Panc1 (cell line): ENCODE measurements at regions of chr22 and their contacts with region 1.

Region 1: DNA sequence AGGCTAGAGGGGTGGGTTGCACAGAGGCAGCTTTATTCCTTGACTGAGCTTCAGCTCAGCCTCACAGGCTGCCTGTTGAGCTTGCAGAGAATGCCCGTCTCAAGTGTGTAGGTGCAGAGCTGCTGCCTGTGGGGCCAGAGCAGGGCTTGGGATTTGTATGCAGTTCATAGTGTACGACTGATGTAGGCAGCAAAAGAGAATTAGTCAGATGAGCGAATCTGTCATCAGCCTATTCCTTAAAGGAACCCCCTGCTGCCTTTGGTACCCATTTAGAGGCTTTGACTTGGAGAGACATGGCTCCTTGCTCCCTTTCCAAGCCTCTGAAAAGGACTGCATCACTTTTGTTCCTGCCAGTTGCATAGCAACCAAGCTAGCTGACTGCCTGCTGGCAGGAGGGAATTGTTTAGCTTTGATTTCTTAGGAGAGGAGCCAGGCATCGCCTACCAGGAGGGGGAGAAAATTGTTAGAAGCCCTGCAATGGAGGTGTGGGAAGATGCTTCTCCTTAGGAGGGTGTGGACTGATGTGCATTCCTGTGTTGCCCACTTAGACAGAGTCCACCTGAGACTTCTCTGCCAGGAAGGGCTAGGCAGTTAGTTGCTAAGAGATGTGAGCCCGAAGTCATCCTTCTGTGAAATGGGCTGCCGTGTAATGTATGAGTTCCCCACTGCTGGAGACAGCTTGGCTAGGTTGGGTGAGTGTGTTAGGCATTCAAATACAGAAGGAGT is 10.9 kb downstream of the ACO2 start:
- DNase-seq: no peak
- ATAC-seq: no peak; the same call in 1 of the 2 replicates
- H3K4me3 ChIP-seq: no peak overlapping the region
- H3K27ac ChIP-seq: no peak overlapping the region
- H3K4me1 ChIP-seq: peaks cover 37% of the 10 kb centered on the region
- H3K27me3 ChIP-seq: no peaks in the 10 kb centered on the region
- CTCF ChIP-seq: no peak

Region 2: GRCh38 chr22:41417622-41418390 is 62.0 kb before region 1 on chr22:
- CTCF ChIA-PET with region 1: no interaction called
- POLR2A ChIA-PET with region 1: no interaction called
- in situ Hi-C with region 1: no loop called
- intact Hi-C with region 1: no loop called
- DNase-seq: no peak
- ATAC-seq: no peak
- H3K4me3 ChIP-seq: no peak overlapping the region
- H3K27ac ChIP-seq: no peak overlapping the region
- H3K4me1 ChIP-seq: peaks cover 6% of the 10 kb centered on the region
- H3K27me3 ChIP-seq: no peaks in the 10 kb centered on the region
- CTCF ChIP-seq: no peak

Region 3: DNA sequence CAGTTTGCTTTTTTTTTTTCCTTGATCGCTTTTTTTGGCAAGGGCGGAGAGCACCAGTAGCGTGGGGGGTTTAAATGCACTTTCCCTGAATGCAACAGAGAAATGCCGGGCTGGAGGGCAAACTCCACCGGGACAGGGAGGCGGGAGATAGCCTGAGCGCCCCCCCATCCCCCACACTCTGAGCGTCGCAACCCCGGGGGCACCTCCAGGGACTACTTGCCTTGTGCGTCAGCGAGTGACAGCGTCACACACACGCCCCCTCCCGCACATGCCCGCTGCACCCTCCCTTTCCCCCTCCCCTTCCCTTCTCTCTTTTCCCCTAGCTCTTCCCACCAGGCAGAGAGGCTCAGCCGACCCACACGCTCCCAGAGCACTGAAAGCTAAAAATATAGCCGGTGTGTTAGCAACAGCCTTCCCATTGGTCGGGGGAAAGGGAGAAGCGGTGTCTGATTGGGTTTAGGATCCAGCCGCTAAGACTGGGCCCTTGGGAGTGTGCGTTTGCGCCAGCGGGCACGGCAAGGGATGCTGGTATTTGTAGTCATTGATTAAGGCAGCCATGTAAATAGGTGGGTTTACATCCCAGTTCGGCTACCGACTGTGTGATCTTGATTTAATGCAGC is 31.5 kb before region 1 on chr22:
- CTCF ChIA-PET with region 1: no interaction called
- POLR2A ChIA-PET with region 1: interaction called, 14 read pairs
- in situ Hi-C with region 1: no loop called
- intact Hi-C with region 1: no loop called
- DNase-seq: peak; percentile 95
- ATAC-seq: peak; percentile 87
- H3K4me3 ChIP-seq: peak overlapping the region; percentile 81 to 96
- H3K27ac ChIP-seq: peak overlapping the region; percentile 95
- H3K4me1 ChIP-seq: no peaks in the 10 kb centered on the region
- H3K27me3 ChIP-seq: no peaks in the 10 kb centered on the region
- CTCF ChIP-seq: no peak

Region 4: DNA sequence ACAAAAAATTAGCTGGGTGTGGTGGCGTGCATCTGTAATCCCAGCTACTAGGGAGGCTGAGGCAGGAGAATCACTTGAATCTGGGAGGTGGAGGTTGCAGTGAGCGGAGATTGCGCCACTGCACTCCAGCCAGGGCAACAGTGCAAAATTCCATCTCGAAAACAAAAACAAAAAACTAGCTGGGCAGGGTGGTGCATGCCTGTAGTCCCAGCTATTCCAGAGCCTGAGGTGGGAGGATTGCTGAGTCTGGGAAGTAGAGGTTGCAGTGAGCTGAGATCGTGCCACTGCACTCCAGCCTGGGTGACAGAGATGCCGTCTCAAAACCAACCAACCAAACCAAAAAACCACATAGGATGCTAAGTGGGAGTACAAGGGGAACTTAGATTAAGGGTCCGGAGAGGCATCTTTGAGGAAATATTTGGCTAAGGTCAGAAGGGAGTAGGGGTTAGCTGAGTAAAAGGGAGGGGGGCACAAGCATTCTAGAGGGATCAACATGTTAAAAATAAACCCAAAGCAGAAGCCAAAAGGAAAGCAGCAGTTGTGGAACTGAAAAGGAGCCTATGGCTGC is 21.6 kb before region 1 on chr22:
- CTCF ChIA-PET with region 1: no interaction called
- POLR2A ChIA-PET with region 1: interaction called, 10 read pairs
- in situ Hi-C with region 1: no loop called
- intact Hi-C with region 1: no loop called
- DNase-seq: no peak
- ATAC-seq: no peak
- H3K4me3 ChIP-seq: no peak overlapping the region
- H3K27ac ChIP-seq: no peak overlapping the region
- H3K4me1 ChIP-seq: no peaks in the 10 kb centered on the region
- H3K27me3 ChIP-seq: no peaks in the 10 kb centered on the region
- CTCF ChIP-seq: no peak

Region 5: DNA sequence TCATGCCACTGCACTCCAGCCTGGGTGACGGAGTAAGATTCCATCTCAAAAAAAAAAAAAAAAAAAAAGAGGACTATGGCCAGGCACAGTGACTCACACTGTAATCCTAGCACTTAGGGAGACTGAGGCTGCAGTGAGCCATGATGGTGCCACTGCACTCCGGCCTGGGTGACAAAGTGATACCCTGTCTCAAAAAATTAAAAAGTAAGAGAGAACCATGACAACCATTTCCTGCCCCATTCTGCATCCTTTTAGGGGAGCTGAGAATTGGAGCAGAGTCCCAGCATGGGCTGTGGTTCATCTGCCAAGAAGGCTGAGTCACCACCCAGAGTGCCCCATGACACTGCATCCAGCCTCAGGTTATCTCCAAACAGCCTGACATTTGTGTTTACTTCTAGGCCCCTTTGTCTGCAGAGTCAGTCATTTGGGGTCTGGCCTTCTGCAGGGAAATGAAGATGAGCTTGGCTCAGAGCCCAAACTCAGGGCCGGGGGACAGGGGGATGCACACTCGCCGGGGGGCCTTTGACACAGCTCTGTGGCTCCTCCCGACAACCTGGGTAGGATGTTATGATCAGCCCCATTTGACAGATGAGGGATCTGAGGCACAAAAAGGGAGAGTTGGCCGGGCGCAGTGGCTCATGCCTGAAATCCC is 85.7 kb after region 1 on chr22:
- CTCF ChIA-PET with region 1: no interaction called
- POLR2A ChIA-PET with region 1: no interaction called
- in situ Hi-C with region 1: no loop called
- intact Hi-C with region 1: no loop called
- DNase-seq: no peak
- ATAC-seq: peak; percentile 81
- H3K4me3 ChIP-seq: no peak overlapping the region
- H3K27ac ChIP-seq: 0 out of 2 replicates have a peak overlapping the region, but pooled peaks have one; percentile 8
- H3K4me1 ChIP-seq: peaks cover 49% of the 10 kb centered on the region
- H3K27me3 ChIP-seq: no peaks in the 10 kb centered on the region
- CTCF ChIP-seq: no peak